ENCODE measurements at regions of chr11 and their contacts with region 1.

Region 1: GRCh38 chr11:110092515-110093404 is at the start of gene ZC3H12C:
- DNase-seq: peak; percentile 97
- H3K4me3 ChIP-seq: peak within 1 kb of the TSS; percentile 77
- H3K27ac ChIP-seq: peak within 1 kb of the TSS; percentile 95
- H3K4me1 ChIP-seq: peaks cover 38% of the 10 kb centered on the region
- H3K27me3 ChIP-seq: no peaks in the 10 kb centered on the region
- CTCF ChIP-seq: peak; percentile 53; the same call in 1 of the 2 replicates
- total RNA-seq, gene ZC3H12C: 18.7 and 21.7 TPM in 2 replicates

Region 2: DNA sequence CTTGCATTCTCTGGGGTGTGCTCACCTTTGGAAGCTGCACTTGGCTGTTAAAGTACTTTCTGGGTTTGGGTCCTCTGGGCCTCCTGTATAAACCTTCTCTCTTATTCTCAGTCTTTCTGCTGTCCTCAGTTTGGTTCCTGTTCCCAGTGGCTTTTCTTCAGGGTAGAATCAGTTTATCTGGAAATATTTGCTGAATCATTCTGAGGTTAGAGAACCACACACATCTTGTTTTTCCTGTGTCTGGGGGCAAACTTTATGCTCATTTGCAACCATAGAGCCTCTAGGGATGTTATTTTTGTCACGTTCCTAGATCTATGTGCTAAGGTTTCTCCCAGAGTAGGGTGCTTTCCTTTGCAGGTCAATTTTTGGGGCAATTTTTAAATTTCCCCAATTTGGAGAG is 895.1 kb before region 1 on chr11:
- CTCF ChIA-PET with region 1: no interaction called
- POLR2A ChIA-PET with region 1: no interaction called
- intact Hi-C with region 1: no loop called
- DNase-seq: no peak
- H3K4me3 ChIP-seq: no peak overlapping the region
- H3K27ac ChIP-seq: no peak overlapping the region
- H3K4me1 ChIP-seq: peaks cover 17% of the 10 kb centered on the region
- H3K27me3 ChIP-seq: no peaks in the 10 kb centered on the region
- CTCF ChIP-seq: no peak

Region 3: GRCh38 chr11:110173811-110174644 is 81.3 kb after region 1 on chr11:
- CTCF ChIA-PET with region 1: no interaction called
- POLR2A ChIA-PET with region 1: no interaction called
- intact Hi-C with region 1: loop called (anchors 5 kb)
- DNase-seq: peak; percentile 87
- H3K4me3 ChIP-seq: peak overlapping the region; percentile 9
- H3K27ac ChIP-seq: no peak overlapping the region
- H3K4me1 ChIP-seq: peaks cover 45% of the 10 kb centered on the region
- H3K27me3 ChIP-seq: no peaks in the 10 kb centered on the region
- CTCF ChIP-seq: peak; percentile 98

Region 4: DNA sequence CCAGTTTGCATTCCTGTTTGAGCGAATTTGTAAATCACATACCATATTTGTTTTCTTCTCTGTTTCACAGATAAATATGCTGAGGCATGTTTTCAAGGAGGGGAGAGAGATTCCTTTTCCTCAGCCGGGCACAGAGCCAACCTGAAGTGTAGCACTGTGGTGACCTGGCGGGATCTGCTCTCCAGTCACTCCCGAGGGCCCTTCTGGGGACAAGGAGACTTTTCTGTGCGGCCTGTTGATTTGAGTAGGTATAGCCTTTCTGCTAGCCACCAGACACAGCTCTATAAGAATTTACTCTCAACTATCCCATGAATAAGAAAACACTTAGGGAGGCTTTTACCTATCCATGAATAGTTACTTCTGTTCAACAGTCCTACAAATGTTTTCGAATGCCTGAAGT is 273.5 kb after region 1 on chr11:
- CTCF ChIA-PET with region 1: no interaction called
- POLR2A ChIA-PET with region 1: no interaction called
- intact Hi-C with region 1: no loop called
- DNase-seq: no peak
- H3K4me3 ChIP-seq: no peak overlapping the region
- H3K27ac ChIP-seq: peak overlapping the region; percentile 76
- H3K4me1 ChIP-seq: peaks cover 39% of the 10 kb centered on the region
- H3K27me3 ChIP-seq: no peaks in the 10 kb centered on the region
- CTCF ChIP-seq: no peak

Measured in A673 (cell line).